BJ (cell line): ENCODE measurements at regions of chr15 and their contacts with region 1.

Region 1: GRCh38 chr15:89888214-89888804 is 5.5 kb downstream of the AP3S2 start:
- DNase-seq: peak; percentile 67
- H3K4me3 ChIP-seq: no peak overlapping the region
- H3K27me3 ChIP-seq: no peaks in the 10 kb centered on the region
- CTCF ChIP-seq: peak; percentile 66

Region 2: GRCh38 chr15:89728254-89728653 is 160.1 kb before region 1 on chr15:
- CTCF ChIA-PET with region 1: interaction called, 25 read pairs
- POLR2A ChIA-PET with region 1: no interaction called
- DNase-seq: no peak
- H3K4me3 ChIP-seq: no peak overlapping the region
- H3K27me3 ChIP-seq: peaks cover 19% of the 10 kb centered on the region
- CTCF ChIP-seq: no peak

Region 3: GRCh38 chr15:89750560-89751542 is 137.5 kb before region 1 on chr15 and contains the start of gene MESP1:
- CTCF ChIA-PET with region 1: interaction called, 47 read pairs
- POLR2A ChIA-PET with region 1: no interaction called
- DNase-seq: peak; percentile 35
- H3K4me3 ChIP-seq: peak within 1 kb of the TSS; percentile 54
- H3K27me3 ChIP-seq: peaks cover 2% of the 10 kb centered on the region
- CTCF ChIP-seq: peak; percentile 81
- polyA plus RNA-seq, gene MESP1: 0.20 and 0.49 TPM in 2 replicates

Region 4: DNA sequence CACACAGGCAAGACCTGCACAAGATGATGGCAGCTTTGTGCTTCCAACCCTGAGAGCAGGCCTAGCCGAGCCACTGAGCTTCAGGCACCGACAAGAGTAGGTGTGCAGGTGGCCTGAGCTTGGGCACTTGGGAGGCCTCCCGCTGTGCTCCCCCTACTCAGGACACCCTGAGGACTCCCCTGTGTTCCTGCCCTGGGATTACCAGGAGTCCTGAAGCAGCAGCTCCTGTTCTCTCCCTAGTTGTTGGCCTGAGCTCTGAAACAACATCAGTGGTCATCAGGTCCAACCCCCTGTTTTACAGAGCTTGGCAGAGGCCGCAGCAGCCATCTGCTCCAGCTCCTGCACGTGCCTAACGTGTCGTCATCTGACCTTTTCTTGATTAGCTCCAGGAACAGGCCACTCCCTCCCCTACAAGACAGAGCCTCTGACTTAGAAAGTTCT is 120.2 kb before region 1 on chr15:
- CTCF ChIA-PET with region 1: interaction called, 19 read pairs
- POLR2A ChIA-PET with region 1: interaction called, 4 read pairs
- DNase-seq: peak; percentile 27
- H3K4me3 ChIP-seq: no peak overlapping the region
- H3K27me3 ChIP-seq: no peaks in the 10 kb centered on the region
- CTCF ChIP-seq: no peak

Region 5: GRCh38 chr15:89874926-89875564 is 13.3 kb before region 1 on chr15:
- CTCF ChIA-PET with region 1: interaction called, 37 read pairs
- POLR2A ChIA-PET with region 1: no interaction called
- DNase-seq: no peak
- H3K4me3 ChIP-seq: no peak overlapping the region
- H3K27me3 ChIP-seq: no peaks in the 10 kb centered on the region
- CTCF ChIP-seq: peak; percentile 98

Region 6: GRCh38 chr15:90071208-90071807 is 183.0 kb after region 1 on chr15:
- CTCF ChIA-PET with region 1: interaction called, 10 read pairs
- POLR2A ChIA-PET with region 1: no interaction called
- DNase-seq: peak; percentile 23
- H3K4me3 ChIP-seq: no peak overlapping the region
- H3K27me3 ChIP-seq: no peaks in the 10 kb centered on the region
- CTCF ChIP-seq: peak; percentile 83